B cell (primary cell): ENCODE measurements at regions of chr22 and their contacts with region 1.

Region 1: GRCh38 chr22:31630331-31631329 is 31.4 kb downstream of the PISD start:
- DNase-seq: peak; percentile 98
- ATAC-seq: peak; percentile 82
- H3K4me3 ChIP-seq: peak overlapping the region in 4 of 5 experiments; percentile 60 to 79 (median 66)
- H3K4me3 Mint-ChIP-seq: peak overlapping the region; percentile 92
- H3K27ac ChIP-seq: peak overlapping the region; percentile 95 to 98
- H3K27ac Mint-ChIP-seq: peak overlapping the region; percentile 96
- H3K4me1 ChIP-seq: peaks cover 23 to 58% of the 10 kb centered on the region in 2 donors
- H3K4me1 Mint-ChIP-seq: peaks cover 65% of the 10 kb centered on the region
- H3K27me3 ChIP-seq: no peaks in the 10 kb centered on the region
- H3K27me3 Mint-ChIP-seq: no peaks in the 10 kb centered on the region
- CTCF ChIP-seq: no peak

Region 2: DNA sequence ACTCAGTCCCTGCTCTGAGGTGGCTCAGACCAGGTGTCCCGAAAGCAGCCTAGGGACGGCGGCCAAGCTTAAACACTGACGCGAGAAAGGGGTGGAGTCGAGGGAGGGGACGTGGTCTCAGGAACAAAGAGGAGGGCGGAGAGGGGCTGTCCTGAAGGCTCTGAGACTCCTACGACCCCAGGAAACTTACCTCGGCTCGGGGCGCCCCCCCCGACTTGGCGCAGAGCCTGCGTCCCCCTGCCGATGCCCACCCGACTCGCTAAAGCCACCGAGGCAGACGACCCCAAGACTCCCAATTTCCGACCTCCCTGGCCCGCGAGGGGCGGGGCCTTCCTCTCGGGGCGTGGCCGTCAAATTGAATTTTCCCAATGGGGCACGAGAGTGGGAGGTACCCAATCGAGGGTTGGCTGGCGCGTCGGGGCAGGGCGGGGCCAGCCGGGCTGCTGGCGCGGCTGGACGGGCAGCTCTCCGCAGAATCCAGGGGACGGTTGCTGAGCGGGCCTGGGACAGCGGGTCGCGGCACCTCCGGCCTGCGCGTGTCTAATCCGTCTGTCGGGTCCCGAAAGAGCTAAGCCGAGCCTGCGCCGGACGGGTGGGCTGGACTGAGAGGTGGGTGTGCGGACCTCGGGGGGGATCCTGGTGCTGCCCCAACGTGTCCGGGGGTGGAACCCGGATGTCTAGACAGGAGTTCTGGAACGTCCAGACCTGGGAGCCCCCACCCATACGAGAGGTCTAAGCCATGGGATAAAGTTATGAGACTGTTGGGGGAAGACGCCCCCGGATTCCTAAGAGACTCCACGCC is 549.6 kb before region 1 on chr22 and contains the start of gene SMTN:
- CTCF ChIA-PET with region 1: no interaction called
- POLR2A ChIA-PET with region 1: no interaction called
- intact Hi-C with region 1: loop called (anchors 5 kb)
- DNase-seq: peak; percentile 93
- ATAC-seq: peak; percentile 77
- H3K4me3 ChIP-seq: peak within 1 kb of the TSS; percentile 8 to 75 (median 67)
- H3K4me3 Mint-ChIP-seq: peak within 1 kb of the TSS; percentile 92
- H3K27ac ChIP-seq: no peak within 1 kb of the TSS
- H3K27ac Mint-ChIP-seq: peak within 1 kb of the TSS; percentile 58
- H3K4me1 ChIP-seq: peaks cover 22 to 50% of the 10 kb centered on the region in 2 donors
- H3K4me1 Mint-ChIP-seq: peaks cover 34% of the 10 kb centered on the region
- H3K27me3 ChIP-seq: no peaks in the 10 kb centered on the region
- H3K27me3 Mint-ChIP-seq: no peaks in the 10 kb centered on the region
- CTCF ChIP-seq: no peak
- total RNA-seq, gene SMTN: 4.0 and 4.7 TPM in 2 replicates

Region 3: DNA sequence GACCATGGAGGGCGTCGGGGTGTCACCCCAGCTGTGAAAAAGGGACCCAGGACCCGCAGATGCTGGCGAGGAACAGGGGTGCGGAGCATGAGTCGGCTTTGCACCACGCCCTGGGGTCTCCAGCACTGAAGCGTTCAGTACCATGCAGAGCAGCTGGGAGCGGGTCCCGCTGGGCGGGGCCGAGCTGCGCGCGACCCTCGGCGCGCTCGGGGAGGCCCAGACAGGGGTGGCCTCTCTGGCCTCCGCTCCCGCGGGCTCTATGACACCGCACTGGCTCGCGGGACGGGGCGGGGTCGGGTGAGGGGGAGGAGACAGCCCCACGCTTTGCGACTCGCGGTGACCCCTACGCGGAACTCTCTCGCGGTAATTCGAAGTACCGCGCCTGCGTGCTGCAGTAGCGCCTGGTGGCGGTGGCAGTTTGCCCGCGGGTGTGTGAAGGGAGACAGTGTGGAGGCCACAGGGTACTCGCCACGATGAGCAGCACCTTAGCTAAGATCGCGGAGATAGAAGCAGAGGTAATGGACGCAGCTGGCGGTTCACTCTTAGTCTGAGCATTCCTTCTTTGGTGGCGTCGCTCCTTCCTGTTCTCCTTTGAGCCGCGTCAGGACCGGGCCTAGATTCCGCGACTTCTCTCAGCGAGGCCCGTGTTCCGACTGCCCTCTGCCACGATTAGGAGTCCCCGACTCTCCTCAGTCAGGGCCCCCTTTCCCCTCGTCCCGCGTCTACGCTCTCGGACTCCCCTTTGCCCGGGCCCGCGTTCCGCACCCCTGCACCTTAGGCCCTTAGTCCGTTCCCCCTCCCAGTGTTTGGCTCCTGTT is 231.2 kb before region 1 on chr22 and contains the start of gene DRG1:
- CTCF ChIA-PET with region 1: interaction called, 3 read pairs
- POLR2A ChIA-PET with region 1: no interaction called
- intact Hi-C with region 1: loop called (anchors 1 kb)
- DNase-seq: peak; percentile 95
- ATAC-seq: peak; percentile 99
- H3K4me3 ChIP-seq: peak within 1 kb of the TSS; percentile 79 to 88 (median 85)
- H3K4me3 Mint-ChIP-seq: peak within 1 kb of the TSS; percentile 98
- H3K27ac ChIP-seq: peak within 1 kb of the TSS; percentile 60 to 89
- H3K27ac Mint-ChIP-seq: peak within 1 kb of the TSS; percentile 95
- H3K4me1 ChIP-seq: peaks cover 13 to 17% of the 10 kb centered on the region in 2 donors
- H3K4me1 Mint-ChIP-seq: peaks cover 21% of the 10 kb centered on the region
- H3K27me3 ChIP-seq: no peaks in the 10 kb centered on the region
- H3K27me3 Mint-ChIP-seq: peaks cover 2% of the 10 kb centered on the region
- CTCF ChIP-seq: no peak
- total RNA-seq, gene DRG1: 58.9 and 77.7 TPM in 2 replicates

Region 4: DNA sequence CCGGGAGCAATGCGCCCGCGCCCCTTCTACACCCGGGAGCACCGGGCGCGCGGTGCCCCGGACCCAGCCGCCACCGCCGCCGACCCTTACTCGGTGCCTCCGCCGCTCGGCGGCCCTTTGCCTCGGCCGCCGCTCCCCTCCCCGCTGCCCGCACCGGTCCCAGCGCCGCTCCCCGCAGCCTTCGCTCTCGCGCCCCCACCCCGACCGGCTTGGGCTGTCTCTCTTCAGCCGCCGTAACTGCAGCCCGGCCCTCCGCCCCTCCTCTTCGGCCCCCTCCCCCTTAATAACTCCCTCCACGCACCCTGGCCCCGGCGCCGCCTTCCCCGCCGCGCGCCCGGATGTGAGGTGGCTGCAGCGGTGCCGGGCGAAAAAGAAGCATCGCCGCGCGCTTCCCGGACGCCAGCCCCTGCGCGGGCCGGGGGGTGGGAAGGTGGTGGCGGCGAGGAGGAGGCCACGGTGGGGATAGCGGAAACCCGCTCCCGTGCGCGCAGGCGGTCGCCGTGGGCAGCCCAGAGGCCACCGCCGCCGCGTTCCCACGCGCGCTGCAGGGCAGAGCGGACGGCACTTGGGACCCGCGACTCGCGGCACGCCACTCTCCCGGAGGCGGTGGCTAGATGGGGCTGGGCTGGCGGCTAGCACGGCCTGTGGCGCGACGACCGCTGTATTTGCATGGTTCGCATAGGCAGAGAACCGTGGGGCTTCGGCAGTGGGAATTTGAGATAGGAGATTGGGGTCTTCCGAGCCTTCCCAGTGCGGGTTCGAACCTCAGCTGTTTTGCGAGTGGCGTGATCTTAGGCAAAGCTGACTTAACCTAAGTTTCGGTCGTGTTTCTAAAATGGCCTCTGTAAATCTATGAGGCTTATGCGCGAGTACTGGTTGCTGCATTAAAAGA is 140.8 kb before region 1 on chr22 and contains the start of gene EIF4ENIF1:
- CTCF ChIA-PET with region 1: interaction called, 7 read pairs
- POLR2A ChIA-PET with region 1: interaction called, 5 read pairs
- intact Hi-C with region 1: loop called (anchors 1 kb)
- DNase-seq: peak; percentile 93
- ATAC-seq: peak; percentile 67
- H3K4me3 ChIP-seq: peak within 1 kb of the TSS; percentile 67 to 100 (median 84)
- H3K4me3 Mint-ChIP-seq: peak within 1 kb of the TSS; percentile 91
- H3K27ac ChIP-seq: peak within 1 kb of the TSS; percentile 93 to 99
- H3K27ac Mint-ChIP-seq: peak within 1 kb of the TSS; percentile 98
- H3K4me1 ChIP-seq: peaks cover 29 to 47% of the 10 kb centered on the region in 2 donors
- H3K4me1 Mint-ChIP-seq: peaks cover 52% of the 10 kb centered on the region
- H3K27me3 ChIP-seq: no peaks in the 10 kb centered on the region
- H3K27me3 Mint-ChIP-seq: no peaks in the 10 kb centered on the region
- CTCF ChIP-seq: no peak
- total RNA-seq, gene EIF4ENIF1: 58.3 and 62.7 TPM in 2 replicates

Region 5: DNA sequence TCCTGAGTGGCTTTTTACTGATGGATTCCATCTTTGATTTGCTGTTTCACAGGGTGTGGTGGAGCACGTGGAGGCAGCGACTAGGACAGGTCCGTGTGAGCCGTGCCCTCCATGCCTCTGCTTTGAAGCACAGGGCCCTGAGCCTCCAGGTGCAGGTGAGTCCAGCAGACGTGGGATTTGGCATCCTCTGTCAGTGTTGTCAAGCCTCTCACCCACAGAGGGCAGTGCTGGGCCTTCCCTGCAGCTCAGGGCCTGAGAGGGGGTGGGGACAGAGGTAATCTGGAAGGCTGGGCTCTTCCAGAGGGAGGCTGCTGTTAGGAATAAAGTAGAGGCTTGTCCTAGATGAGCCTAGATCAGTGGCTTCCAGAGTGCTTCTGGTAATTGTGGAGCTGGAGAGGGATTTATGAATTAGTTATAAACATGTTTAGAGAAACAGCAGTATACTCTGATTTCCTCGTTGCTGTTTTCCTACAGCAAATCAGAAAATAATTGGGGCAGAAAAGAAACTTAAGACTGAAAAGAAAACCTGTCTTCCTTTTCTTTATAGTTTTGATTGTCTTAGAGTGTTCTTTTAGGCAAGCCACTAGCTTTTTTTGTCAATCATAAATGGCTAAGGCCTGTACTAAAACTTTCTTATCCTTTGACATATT is 69.3 kb before region 1 on chr22:
- CTCF ChIA-PET with region 1: interaction called, 88 read pairs
- POLR2A ChIA-PET with region 1: no interaction called
- intact Hi-C with region 1: loop called (anchors 1 kb)
- DNase-seq: peak; percentile 51
- ATAC-seq: peak; percentile 68
- H3K4me3 ChIP-seq: no peak overlapping the region
- H3K4me3 Mint-ChIP-seq: no peak overlapping the region
- H3K27ac ChIP-seq: no peak overlapping the region
- H3K27ac Mint-ChIP-seq: no peak overlapping the region
- H3K4me1 ChIP-seq: no peaks in the 10 kb centered on the region
- H3K4me1 Mint-ChIP-seq: peaks cover 1% of the 10 kb centered on the region
- H3K27me3 ChIP-seq: no peaks in the 10 kb centered on the region
- H3K27me3 Mint-ChIP-seq: no peaks in the 10 kb centered on the region
- CTCF ChIP-seq: peak; percentile 66

Region 6: GRCh38 chr22:31749636-31750364 is 119.2 kb after region 1 on chr22 and contains the start of gene PRR14L:
- CTCF ChIA-PET with region 1: no interaction called
- POLR2A ChIA-PET with region 1: no interaction called
- intact Hi-C with region 1: loop called (anchors 2 kb)
- DNase-seq: peak; percentile 99
- ATAC-seq: peak; percentile 74
- H3K4me3 ChIP-seq: peak within 1 kb of the TSS; percentile 81 to 95 (median 83)
- H3K4me3 Mint-ChIP-seq: peak within 1 kb of the TSS; percentile 95
- H3K27ac ChIP-seq: peak within 1 kb of the TSS; percentile 72 to 93
- H3K27ac Mint-ChIP-seq: peak within 1 kb of the TSS; percentile 99
- H3K4me1 ChIP-seq: peaks cover 41 to 43% of the 10 kb centered on the region in 2 donors
- H3K4me1 Mint-ChIP-seq: peaks cover 52% of the 10 kb centered on the region
- H3K27me3 ChIP-seq: no peaks in the 10 kb centered on the region
- H3K27me3 Mint-ChIP-seq: no peaks in the 10 kb centered on the region
- CTCF ChIP-seq: peak; percentile 17
- total RNA-seq, gene PRR14L: 69.6 and 78.5 TPM in 2 replicates